WTC11 (cell line): ENCODE measurements at regions of chr14 and their contacts with region 1.

Region 1: GRCh38 chr14:34098045-34098984 is 147.4 kb upstream of the EGLN3 start:
- DNase-seq: peak; percentile 25
- ATAC-seq: peak; percentile 18
- H3K4me3 Mint-ChIP-seq: no peak overlapping the region
- H3K27ac Mint-ChIP-seq: peak overlapping the region; percentile 18; the same call in 1 of the 2 replicates
- H3K4me1 Mint-ChIP-seq: peaks cover 9% of the 10 kb centered on the region
- H3K27me3 Mint-ChIP-seq: no peaks in the 10 kb centered on the region
- CTCF ChIP-seq: peak; percentile 38; the same call in 1 of the 2 replicates

Region 2: DNA sequence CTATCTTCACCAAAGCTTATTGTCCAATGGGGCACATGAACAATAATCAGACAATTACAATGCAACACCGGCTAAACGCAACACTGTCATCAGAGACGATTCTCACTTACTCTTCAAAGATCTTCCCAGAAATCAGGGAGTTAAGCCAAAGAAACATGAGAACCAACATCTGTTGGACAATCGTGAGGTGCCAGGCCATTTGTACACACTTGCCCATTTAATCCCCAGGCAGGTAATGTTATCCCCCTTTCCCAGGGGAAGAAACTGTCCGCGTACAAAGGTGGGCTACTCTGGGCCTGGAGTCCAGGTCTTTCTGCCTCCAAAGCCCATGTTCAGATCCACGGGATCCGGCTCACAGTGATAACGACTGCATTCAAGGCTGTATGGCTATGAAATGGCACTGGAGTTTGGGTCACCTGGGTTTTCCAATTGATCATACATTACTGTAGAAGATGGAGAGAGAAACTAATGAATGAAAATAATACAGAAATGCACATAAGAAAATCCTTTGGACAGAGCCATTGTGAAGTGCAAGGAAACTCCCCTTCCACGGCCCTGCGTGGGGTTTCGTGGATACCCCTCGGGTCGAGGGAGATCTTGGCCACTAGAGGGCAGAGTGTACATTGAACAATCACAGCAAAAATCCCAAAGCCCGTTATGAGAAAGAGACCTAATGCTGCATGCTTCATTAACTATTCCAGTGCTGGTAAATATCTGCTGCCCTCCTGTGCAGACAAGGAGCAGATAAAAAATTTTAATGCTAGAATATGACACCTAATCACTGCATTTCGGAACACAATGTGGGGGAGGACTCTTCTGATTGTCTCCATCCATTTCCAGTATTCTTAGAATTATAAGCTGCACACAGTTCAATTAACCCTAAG is 258.9 kb before region 1 on chr14:
- CTCF ChIA-PET with region 1: interaction called, 47 read pairs
- POLR2A ChIA-PET with region 1: no interaction called
- DNase-seq: peak; percentile 49
- ATAC-seq: peak; percentile 34; the same call in 1 of the 2 replicates
- H3K4me3 Mint-ChIP-seq: no peak overlapping the region
- H3K27ac Mint-ChIP-seq: no peak overlapping the region
- H3K4me1 Mint-ChIP-seq: peaks cover 18% of the 10 kb centered on the region
- H3K27me3 Mint-ChIP-seq: no peaks in the 10 kb centered on the region
- CTCF ChIP-seq: peak; percentile 78

Region 3: GRCh38 chr14:33908540-33909223 is 189.6 kb before region 1 on chr14:
- CTCF ChIA-PET with region 1: interaction called, 13 read pairs
- POLR2A ChIA-PET with region 1: no interaction called
- DNase-seq: peak; percentile 26
- ATAC-seq: peak; percentile 83
- H3K4me3 Mint-ChIP-seq: no peak overlapping the region
- H3K27ac Mint-ChIP-seq: no peak overlapping the region
- H3K4me1 Mint-ChIP-seq: peaks cover 7% of the 10 kb centered on the region
- H3K27me3 Mint-ChIP-seq: no peaks in the 10 kb centered on the region
- CTCF ChIP-seq: no peak

Region 4: DNA sequence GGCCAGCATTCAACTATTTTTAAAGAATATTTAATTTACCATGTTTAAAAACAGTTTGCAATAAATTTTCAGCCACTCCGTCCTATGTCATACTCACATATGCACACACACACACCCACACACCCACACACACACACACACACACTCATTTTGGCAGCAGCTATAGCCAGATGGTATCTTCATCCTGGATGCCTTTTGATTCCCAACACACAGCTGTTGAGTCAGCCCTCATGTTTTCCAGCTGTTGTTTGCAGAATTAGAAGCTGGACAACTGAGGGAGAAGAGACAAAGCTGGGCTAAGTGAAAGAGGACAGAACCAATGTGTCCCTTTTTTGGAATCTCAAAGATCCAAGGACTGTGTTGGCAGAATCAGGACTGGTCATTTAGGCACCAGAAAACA is 67.5 kb before region 1 on chr14:
- CTCF ChIA-PET with region 1: interaction called, 12 read pairs
- POLR2A ChIA-PET with region 1: no interaction called
- DNase-seq: no peak
- ATAC-seq: no peak
- H3K4me3 Mint-ChIP-seq: no peak overlapping the region
- H3K27ac Mint-ChIP-seq: no peak overlapping the region
- H3K4me1 Mint-ChIP-seq: peaks cover 3% of the 10 kb centered on the region
- H3K27me3 Mint-ChIP-seq: no peaks in the 10 kb centered on the region
- CTCF ChIP-seq: no peak

Region 5: GRCh38 chr14:34043627-34044372 is 54.5 kb before region 1 on chr14:
- CTCF ChIA-PET with region 1: no interaction called
- POLR2A ChIA-PET with region 1: no interaction called
- DNase-seq: no peak
- ATAC-seq: peak; percentile 88
- H3K4me3 Mint-ChIP-seq: no peak overlapping the region
- H3K27ac Mint-ChIP-seq: no peak overlapping the region; the same call in 1 of the 2 replicates
- H3K4me1 Mint-ChIP-seq: peaks cover 10% of the 10 kb centered on the region
- H3K27me3 Mint-ChIP-seq: no peaks in the 10 kb centered on the region; the same call in 1 of the 2 replicates
- CTCF ChIP-seq: no peak

Region 6: DNA sequence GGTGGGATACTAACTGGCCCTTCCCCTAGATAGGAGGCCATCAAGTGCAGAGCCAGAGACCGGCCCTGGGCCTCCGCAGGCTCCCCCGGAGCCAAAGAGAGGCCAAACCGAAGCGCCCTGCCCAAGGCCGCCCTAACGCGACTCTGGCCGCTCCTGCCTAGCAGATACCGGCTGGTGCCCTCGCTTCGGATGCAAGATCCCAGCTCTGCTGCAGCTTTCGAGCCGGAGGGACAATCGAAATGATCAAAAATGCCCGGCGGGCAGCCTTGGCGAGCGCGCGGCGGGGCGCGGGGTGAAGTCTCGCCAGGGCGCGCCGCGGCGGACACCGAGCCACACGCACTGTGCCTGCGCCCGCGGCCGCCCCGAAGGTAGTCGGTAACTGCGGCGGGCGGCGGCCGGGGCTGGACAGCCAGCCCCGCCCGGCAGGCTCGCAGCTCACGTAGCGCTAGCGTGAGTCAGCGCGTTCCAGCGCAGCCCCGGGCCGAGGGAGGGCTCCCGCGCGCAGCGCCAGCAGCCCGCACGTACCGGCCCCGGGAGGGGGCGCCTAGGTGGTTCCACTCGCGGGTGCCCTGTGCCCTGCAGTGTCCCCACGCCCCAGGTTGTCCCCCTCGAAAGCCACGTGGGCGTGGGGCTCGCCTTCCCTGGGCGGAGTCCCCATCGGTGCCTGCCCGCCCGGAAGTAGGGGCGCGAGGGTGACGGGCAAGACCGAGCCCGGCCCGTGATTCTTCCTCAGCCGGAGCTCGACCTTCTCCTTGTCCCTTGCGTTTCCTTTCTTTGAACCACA is 38.3 kb before region 1 on chr14:
- CTCF ChIA-PET with region 1: interaction called, 17 read pairs
- POLR2A ChIA-PET with region 1: no interaction called
- DNase-seq: peak; percentile 74
- ATAC-seq: peak; percentile 92
- H3K4me3 Mint-ChIP-seq: peak overlapping the region; percentile 84
- H3K27ac Mint-ChIP-seq: no peak overlapping the region
- H3K4me1 Mint-ChIP-seq: peaks cover 15% of the 10 kb centered on the region
- H3K27me3 Mint-ChIP-seq: peaks cover 26% of the 10 kb centered on the region
- CTCF ChIP-seq: no peak

Region 7: DNA sequence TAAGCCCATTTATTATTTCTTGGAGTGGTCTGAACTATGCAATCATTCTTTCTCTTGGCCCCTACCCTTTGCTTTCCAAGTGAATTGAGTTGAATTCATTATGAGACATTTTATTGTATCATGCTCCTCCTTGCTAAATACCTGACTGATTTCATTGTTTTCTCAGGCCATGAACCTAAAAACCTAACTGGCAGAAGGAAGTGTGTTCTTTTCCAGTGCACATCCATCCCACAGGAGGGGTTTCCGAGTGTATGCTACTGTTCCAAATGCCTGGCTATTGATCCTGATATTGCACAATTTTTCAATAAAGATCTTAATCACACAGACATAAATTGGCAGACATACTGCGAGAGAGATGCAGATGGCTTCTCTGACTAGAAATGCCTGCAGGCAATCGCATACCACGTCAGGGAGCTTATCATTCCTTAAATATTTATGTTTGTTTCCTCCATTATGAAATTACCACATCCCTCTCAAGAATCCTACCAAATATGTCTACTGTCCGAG is 14.7 kb after region 1 on chr14:
- CTCF ChIA-PET with region 1: interaction called, 11 read pairs
- POLR2A ChIA-PET with region 1: no interaction called
- DNase-seq: no peak
- ATAC-seq: no peak
- H3K4me3 Mint-ChIP-seq: no peak overlapping the region
- H3K27ac Mint-ChIP-seq: no peak overlapping the region
- H3K4me1 Mint-ChIP-seq: no peaks in the 10 kb centered on the region
- H3K27me3 Mint-ChIP-seq: no peaks in the 10 kb centered on the region; the same call in 1 of the 2 replicates
- CTCF ChIP-seq: no peak

Region 8: GRCh38 chr14:34300882-34301734 is 202.8 kb after region 1 on chr14:
- CTCF ChIA-PET with region 1: interaction called, 12 read pairs
- POLR2A ChIA-PET with region 1: no interaction called
- DNase-seq: no peak
- ATAC-seq: peak; percentile 50
- H3K4me3 Mint-ChIP-seq: no peak overlapping the region
- H3K27ac Mint-ChIP-seq: no peak overlapping the region
- H3K4me1 Mint-ChIP-seq: peaks cover 18% of the 10 kb centered on the region
- H3K27me3 Mint-ChIP-seq: peaks cover 29% of the 10 kb centered on the region
- CTCF ChIP-seq: peak; percentile 73